HCT116 (cell line): ENCODE measurements at regions of chr17 and their contacts with region 1.

Region 1: GRCh38 chr17:17859909-17860765 is 23.4 kb upstream of the SREBF1 start:
- DNase-seq: no peak
- ATAC-seq: peak; percentile 98
- H3K4me3 ChIP-seq: no peak overlapping the region
- H3K27ac ChIP-seq: no peak overlapping the region
- H3K4me1 ChIP-seq: peaks cover 24 to 36% of the 10 kb centered on the region in 2 experiments; a peak in 3 of 4 replicates
- H3K27me3 ChIP-seq: no peaks in the 10 kb centered on the region
- CTCF ChIP-seq: peak; percentile 92 to 97 (median 93)
- POLR2A ChIP-seq: no peak
- RAD21 ChIP-seq: peak; percentile 99

Region 2: GRCh38 chr17:17729620-17730249 is 130.4 kb before region 1 on chr17:
- CTCF ChIA-PET with region 1: no interaction called
- POLR2A ChIA-PET with region 1: no interaction called
- RAD21 ChIA-PET with region 1: no interaction called
- intact Hi-C with region 1: loop called (anchors 2 kb)
- DNase-seq: peak; percentile 19
- ATAC-seq: peak; percentile 85
- H3K4me3 ChIP-seq: no peak overlapping the region
- H3K27ac ChIP-seq: peak overlapping the region; percentile 58
- H3K4me1 ChIP-seq: peaks cover 27 to 62% of the 10 kb centered on the region in 2 experiments
- H3K27me3 ChIP-seq: no peaks in the 10 kb centered on the region
- CTCF ChIP-seq: peak; percentile 40 to 82 (median 73); a peak in 5 of 6 replicates
- POLR2A ChIP-seq: no peak
- RAD21 ChIP-seq: peak; percentile 68

Region 3: GRCh38 chr17:17812211-17813057 is 47.7 kb before region 1 on chr17:
- CTCF ChIA-PET with region 1: interaction called, 3 read pairs
- POLR2A ChIA-PET with region 1: no interaction called
- RAD21 ChIA-PET with region 1: no interaction called
- intact Hi-C with region 1: loop called (anchors 2 kb)
- DNase-seq: no peak
- ATAC-seq: peak; percentile 46
- H3K4me3 ChIP-seq: no peak overlapping the region
- H3K27ac ChIP-seq: peak overlapping the region; percentile 54
- H3K4me1 ChIP-seq: peaks cover 8 to 28% of the 10 kb centered on the region in 2 experiments; a peak in 3 of 4 replicates
- H3K27me3 ChIP-seq: no peaks in the 10 kb centered on the region
- CTCF ChIP-seq: peak; percentile 66 to 98 (median 96); a peak in 5 of 6 replicates
- POLR2A ChIP-seq: no peak
- RAD21 ChIP-seq: peak; percentile 79

Region 4: DNA sequence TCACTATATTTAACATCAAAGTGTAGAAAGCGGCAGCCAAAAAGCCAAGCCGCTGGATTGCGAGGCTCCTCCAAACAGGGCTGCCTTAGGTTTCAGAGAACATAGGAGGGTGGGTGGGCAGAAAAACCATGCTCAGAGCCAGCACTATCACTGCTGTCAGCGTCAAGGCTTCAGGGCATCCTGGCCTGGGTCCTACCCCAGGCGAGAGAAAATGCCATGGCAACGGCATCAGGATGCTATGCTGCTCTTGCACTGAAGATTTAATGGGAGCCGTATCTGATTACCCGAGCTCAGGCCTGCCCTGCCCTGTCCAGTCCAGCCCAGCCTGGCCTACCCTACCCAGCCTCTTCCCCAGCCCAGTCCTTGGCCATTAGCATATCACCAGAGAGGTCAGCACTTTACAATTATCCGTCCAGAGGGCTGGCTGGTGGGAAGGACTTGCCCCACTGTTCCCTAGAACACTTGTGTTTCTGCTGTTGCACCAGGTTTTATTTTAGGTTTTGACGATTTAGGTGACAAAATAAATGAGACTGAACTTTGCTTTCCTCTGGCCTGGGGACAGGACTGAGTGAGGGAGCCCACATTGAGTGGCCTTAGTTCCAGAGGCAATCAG is 51.0 kb after region 1 on chr17:
- CTCF ChIA-PET with region 1: no interaction called
- POLR2A ChIA-PET with region 1: no interaction called
- RAD21 ChIA-PET with region 1: no interaction called
- intact Hi-C with region 1: no loop called
- DNase-seq: no peak
- ATAC-seq: no peak
- H3K4me3 ChIP-seq: no peak overlapping the region
- H3K27ac ChIP-seq: no peak overlapping the region
- H3K4me1 ChIP-seq: peaks cover 20 to 30% of the 10 kb centered on the region in 2 experiments
- H3K27me3 ChIP-seq: no peaks in the 10 kb centered on the region
- CTCF ChIP-seq: no peak
- POLR2A ChIP-seq: no peak
- RAD21 ChIP-seq: no peak